ENCODE measurements at regions of chr12 and their contacts with region 1.

Region 1: GRCh38 chr12:20601668-20602280 is 93.4 kb upstream of the SLCO1C1 start:
- DNase-seq: no peak
- H3K4me3 ChIP-seq: peak overlapping the region in 1 of 2 donors; percentile 6
- H3K27ac ChIP-seq: peak overlapping the region; percentile 68 to 86
- H3K4me1 ChIP-seq: peaks cover 0 to 28% of the 10 kb centered on the region in 2 donors
- H3K27me3 ChIP-seq: no peaks in the 10 kb centered on the region
- CTCF ChIP-seq: peak in 2 of 3 experiments; percentile 46 to 68

Region 2: GRCh38 chr12:19654650-19655376 is 947.0 kb before region 1 on chr12:
- intact Hi-C with region 1: loop called (anchors 10 kb)
- DNase-seq: no peak
- H3K4me3 ChIP-seq: no peak overlapping the region
- H3K27ac ChIP-seq: peak overlapping the region; percentile 95 to 97
- H3K4me1 ChIP-seq: peaks cover 12 to 24% of the 10 kb centered on the region in 2 donors
- H3K27me3 ChIP-seq: no peaks in the 10 kb centered on the region
- CTCF ChIP-seq: peak in 2 of 3 experiments; percentile 44 to 53

Region 3: DNA sequence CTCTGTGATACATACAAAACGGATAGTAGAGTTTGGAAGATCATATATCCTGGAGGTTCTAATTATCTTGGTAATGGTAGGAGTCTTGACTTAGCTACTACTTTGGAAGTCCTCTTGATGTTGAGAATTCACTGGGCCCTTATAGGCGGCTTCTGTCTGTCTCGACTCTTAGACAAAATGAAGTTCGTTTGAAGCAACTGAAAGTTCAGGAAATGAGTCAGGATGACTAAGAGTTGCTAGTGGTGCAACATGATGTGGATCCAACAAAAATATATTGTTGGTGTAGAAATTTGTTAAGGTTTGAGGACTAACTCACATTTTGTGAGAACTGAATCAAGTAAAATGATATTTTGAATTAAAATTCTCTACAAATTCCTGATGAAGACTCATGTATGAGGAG is 889.7 kb before region 1 on chr12:
- intact Hi-C with region 1: loop called (anchors 10 kb)
- DNase-seq: peak in 1 of 2 donors; percentile 76
- H3K4me3 ChIP-seq: no peak overlapping the region
- H3K27ac ChIP-seq: peak overlapping the region; percentile 93 to 97
- H3K4me1 ChIP-seq: peaks cover 2 to 23% of the 10 kb centered on the region in 2 donors
- H3K27me3 ChIP-seq: no peaks in the 10 kb centered on the region
- CTCF ChIP-seq: no peak

Region 4: GRCh38 chr12:19757317-19757877 is 844.4 kb before region 1 on chr12:
- intact Hi-C with region 1: loop called (anchors 5 kb)
- DNase-seq: no peak
- H3K4me3 ChIP-seq: no peak overlapping the region
- H3K27ac ChIP-seq: no peak overlapping the region
- H3K4me1 ChIP-seq: peaks cover 0 to 8% of the 10 kb centered on the region in 2 donors
- H3K27me3 ChIP-seq: no peaks in the 10 kb centered on the region
- CTCF ChIP-seq: peak; percentile 19 to 60 (median 40)

Region 5: DNA sequence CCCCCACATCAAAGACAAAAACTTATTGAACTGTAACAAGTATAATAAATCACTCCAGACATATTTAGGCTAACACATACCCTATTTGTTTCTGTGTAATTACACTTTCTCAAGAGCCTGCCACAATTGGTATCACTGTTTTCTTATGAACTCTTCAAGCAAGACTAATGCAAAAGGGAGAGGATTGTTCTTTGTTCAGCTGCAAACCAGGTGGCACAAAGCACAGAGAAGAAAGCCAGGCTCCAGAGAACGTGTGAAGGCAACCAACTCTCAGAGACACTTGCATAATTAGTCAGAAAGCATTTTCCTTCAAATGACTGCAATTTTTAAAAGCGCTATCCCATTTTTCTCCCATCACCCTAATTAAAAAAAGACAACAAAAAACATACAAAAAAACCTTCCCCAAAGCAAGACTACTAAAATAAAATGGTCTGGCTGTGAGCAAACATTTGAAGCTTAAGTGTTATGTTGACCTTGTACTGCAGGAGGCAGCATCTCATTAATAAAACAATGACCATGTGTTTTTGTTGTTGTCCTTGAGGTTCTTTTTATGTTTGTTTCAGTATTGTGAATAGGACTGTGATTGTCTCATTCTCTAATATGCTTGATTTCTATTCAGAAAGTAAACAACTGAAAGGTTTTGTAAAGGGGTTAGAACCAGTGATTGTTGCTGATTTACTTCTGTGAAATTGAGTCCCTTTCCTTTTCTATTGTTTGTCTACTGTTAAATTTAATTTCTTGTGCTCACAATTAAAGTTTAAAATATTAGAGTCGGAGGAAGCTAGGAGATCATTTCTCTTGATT is 686.2 kb before region 1 on chr12:
- intact Hi-C with region 1: loop called (anchors 10 kb)
- DNase-seq: no peak
- H3K4me3 ChIP-seq: no peak overlapping the region
- H3K27ac ChIP-seq: peak overlapping the region; percentile 7 to 47
- H3K4me1 ChIP-seq: peaks cover 0 to 35% of the 10 kb centered on the region in 2 donors
- H3K27me3 ChIP-seq: no peaks in the 10 kb centered on the region
- CTCF ChIP-seq: peak; percentile 54 to 57 (median 56)

Region 6: DNA sequence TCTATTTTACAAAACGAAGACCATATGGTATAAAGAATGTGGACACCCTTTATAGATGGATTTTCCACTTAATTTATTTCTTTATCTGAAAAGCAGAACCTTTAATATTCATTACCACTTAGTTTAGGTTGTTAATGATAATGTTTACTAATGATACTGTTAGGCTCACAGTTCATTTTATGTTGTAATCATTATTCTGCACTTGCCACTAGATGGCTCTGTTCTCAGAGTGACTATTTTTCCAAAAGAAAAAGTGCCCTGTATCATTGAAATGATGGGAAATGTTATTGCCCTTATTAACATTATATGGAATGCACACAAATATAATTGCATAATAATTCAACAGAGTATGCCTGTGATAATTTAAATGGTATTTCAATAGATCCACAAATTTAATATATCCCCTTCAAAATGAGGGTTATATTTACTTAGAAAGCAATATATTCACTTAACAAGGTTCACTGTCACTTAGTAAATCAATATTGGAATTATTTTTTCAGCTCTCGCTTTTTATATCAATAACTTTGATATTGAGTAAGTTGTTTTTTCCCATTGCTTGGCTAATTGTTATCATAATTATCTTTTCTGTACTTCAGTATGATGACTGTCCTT is 137.8 kb before region 1 on chr12:
- intact Hi-C with region 1: loop called (anchors 5 kb)
- DNase-seq: no peak
- H3K4me3 ChIP-seq: no peak overlapping the region
- H3K27ac ChIP-seq: peak overlapping the region; percentile 8 to 29
- H3K4me1 ChIP-seq: peaks cover 0 to 19% of the 10 kb centered on the region in 2 donors
- H3K27me3 ChIP-seq: no peaks in the 10 kb centered on the region
- CTCF ChIP-seq: peak; percentile 15 to 63 (median 62)

Region 7: DNA sequence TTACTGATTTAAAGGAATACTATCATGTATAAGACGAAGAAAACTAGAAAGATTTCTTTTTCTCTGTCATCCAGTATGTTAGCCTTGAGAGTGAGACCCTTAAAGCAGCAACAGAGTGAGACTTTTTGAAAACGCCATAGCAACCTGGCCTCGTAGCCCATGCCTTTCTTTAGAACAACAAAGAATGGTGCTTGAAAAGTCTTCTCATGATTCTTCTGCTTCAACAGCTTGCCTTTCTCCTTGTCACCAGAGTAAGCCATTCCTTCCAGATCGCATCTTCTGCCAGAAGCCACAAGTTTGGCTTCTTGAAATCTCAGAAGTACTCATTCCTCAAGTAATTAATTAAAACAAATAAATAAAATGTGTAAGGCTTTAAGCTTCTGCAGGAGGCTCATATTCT is 124.1 kb before region 1 on chr12:
- intact Hi-C with region 1: no loop called
- DNase-seq: no peak
- H3K4me3 ChIP-seq: peak overlapping the region; percentile 3 to 50
- H3K27ac ChIP-seq: peak overlapping the region; percentile 68 to 69
- H3K4me1 ChIP-seq: peaks cover 0 to 28% of the 10 kb centered on the region in 2 donors
- H3K27me3 ChIP-seq: no peaks in the 10 kb centered on the region
- CTCF ChIP-seq: no peak

Measured in ascending aorta (tissue), 2 donors.